Posterior vena cava (tissue), 2 donors: ENCODE measurements at regions of chr10 and their contacts with region 1.

Region 1: DNA sequence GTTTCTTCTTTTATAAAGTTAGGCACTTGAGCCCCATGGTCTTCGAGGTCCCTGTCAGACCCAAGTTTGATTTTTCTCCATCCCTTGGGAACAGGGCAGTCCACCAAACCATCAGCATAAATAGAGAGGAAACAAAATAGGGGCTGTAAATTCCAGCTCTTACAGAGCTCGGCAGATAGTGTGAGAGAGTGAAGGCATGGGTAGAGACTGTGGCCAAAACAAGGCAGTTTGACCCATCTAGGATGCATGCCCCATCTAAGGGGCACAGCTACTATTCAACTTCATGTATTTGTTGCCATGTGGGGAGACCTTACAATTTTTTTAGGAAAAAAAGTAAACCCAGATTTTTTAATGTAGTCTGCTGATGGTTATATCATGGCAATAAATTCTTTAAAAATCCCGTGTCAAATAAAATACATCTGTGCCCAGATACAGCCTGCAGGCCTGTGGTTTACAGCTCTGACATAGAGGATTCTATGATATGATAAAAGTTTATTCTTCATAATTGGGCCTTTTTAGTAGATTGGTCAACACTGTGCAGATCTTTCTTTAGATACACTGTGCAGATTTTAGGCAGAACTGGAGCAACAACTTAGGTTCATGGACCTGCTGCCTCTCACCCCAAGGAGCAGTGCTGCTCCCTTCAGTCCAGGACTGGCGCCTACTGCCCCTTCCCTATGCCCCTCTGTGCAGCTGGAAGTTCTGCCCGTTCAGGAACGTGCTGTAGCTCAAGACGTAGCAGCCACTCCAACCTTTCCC is 5.3 kb downstream of the PPP1R3C start:
- DNase-seq: no peak

Region 2: DNA sequence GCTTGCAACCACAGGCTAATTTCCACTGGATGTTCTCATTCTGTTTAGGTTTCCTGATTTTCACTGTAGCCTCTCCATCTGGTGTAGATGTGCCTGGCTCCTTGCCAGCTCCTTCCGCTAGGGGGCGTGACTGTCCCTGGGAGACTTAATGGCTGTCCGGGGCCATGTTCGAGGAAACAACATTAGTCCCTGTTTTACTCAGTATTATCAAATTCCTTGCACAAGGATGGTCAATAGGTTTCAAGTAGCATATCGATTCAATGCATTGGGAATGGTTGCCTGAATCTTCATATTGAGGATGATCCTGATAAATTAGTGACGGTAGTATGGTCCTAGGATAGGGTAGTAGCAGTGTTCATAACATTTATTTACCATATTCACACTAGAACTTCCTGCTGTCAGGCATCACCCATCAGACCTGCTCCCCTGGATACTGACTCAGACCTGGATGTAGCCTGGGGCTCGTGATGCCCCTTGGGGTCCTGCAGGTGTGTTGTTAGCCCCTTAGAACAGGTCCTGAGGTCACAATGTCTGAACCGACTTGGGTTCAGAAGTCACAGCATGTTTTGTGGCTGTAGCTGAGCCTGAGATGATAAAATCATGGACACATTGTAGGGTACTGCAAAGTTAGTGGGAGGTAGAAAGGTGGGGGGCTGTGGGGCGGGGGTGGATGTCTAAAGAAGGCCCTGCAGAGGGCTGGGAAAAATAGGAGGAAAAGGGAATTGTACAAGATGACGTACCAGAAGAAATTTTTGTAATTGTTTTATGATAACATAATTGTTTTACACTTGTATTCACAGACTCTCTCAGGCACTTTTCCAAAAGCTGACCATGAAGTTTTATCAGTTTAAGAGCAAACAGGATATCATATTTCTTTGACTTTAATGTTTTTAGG is 1211.9 kb after region 1 on chr10:
- intact Hi-C with region 1: loop called in 1 of 2 experiments (anchors 5 kb)
- DNase-seq: peak; percentile 88